ENCODE measurements at regions of chr4 and their contacts with region 1.

Region 1: GRCh38 chr4:16026160-16026761 is 57.6 kb downstream of the PROM1 start:
- DNase-seq: no peak
- ATAC-seq: peak; percentile 50

Region 2: DNA sequence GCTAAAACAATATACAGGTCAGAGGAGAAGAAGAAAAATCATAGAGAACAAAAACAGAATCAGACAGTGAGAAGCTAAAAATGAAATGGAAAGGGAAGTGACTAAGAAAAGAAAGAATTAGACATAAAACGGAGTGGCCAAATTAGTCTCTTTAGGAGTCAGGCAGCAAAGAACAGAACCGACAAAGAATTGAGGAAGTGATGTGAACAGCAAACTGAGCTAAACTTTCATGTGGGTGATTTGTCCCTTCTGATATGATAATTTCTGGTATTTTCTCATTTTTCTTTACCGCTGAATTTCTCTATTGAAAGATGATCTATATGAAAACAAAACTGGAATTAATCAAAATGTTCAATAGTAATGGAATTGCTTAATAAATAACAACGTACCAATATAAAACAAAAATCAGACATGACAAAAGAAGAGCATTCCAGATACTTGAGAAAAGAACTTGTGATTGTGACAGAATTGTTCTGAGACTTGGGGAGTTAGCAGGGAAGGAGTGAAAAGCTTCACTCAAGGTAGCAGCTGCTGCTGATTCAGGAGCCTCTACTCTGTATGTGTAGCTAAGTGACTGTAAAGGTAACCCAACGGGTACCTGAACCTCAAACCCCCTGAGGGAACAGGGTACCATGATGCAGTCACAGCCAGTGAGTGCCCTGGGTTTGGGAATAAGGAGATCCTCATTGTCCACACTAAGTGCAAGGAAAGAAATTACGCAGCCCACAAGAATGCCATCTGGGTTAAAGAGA is 191.2 kb after region 1 on chr4:
- intact Hi-C with region 1: no loop called
- DNase-seq: no peak
- ATAC-seq: no peak

Region 3: GRCh38 chr4:16264798-16265197 is 238.5 kb after region 1 on chr4:
- intact Hi-C with region 1: loop called in 1 of 2 experiments (anchors 5 kb)
- DNase-seq: no peak
- ATAC-seq: no peak

Measured in left colon (tissue), 2 donors.